ENCODE measurements at regions of chr13 and their contacts with region 1.

Region 1: GRCh38 chr13:41668130-41668757 is 210.9 kb downstream of the RGCC start:
- DNase-seq: peak; percentile 89
- H3K4me3 ChIP-seq: no peak overlapping the region
- H3K27ac ChIP-seq: no peak overlapping the region
- H3K4me1 ChIP-seq: no peaks in the 10 kb centered on the region
- CTCF ChIP-seq: peak; percentile 97

Region 2: GRCh38 chr13:40517486-40518480 is 1150.5 kb before region 1 on chr13:
- CTCF ChIA-PET with region 1: no interaction called
- POLR2A ChIA-PET with region 1: no interaction called
- intact Hi-C with region 1: no loop called
- DNase-seq: peak; percentile 26
- H3K4me3 ChIP-seq: peak overlapping the region; percentile 6
- H3K27ac ChIP-seq: no peak overlapping the region
- H3K4me1 ChIP-seq: peaks cover 39% of the 10 kb centered on the region
- CTCF ChIP-seq: no peak

Region 3: DNA sequence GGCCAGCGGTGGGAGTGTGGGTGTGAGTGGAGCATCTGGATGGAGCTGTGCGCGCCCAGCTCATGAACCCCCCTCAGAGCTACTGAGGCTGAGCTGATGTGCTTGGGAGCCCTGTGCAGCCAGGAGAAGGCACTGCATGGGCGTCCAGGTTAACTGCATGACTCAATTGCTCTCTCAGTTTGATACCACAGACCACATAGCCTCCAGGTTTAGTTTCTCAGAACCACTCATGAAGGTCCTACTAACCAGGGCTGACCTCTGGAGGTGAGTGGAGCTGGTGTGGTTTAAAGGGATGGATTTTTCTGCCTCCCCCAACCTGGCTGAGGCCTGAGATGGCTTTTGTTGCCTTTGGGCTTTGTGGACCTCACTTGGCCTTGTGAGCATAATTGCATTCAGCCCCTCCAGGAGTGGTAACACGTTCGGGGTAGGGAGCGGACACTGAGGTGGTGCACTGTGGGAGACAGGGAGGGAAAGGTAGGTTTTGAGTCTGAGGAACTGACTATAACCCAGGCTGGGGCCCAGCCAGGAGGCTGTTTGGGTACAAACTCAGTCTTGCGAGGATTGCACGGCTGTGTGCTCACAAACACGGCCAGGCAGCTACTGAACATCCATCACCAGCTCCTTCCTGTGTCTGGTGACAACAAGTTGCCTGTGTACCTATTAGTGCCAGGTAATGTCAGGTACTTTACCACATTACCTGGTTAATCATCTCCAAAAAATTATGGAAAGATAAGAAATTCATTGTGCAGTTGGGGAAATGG is 113.4 kb before region 1 on chr13:
- CTCF ChIA-PET with region 1: no interaction called
- POLR2A ChIA-PET with region 1: no interaction called
- intact Hi-C with region 1: no loop called
- DNase-seq: peak; percentile 89
- H3K4me3 ChIP-seq: peak overlapping the region; percentile 32
- H3K27ac ChIP-seq: peak overlapping the region; percentile 77
- H3K4me1 ChIP-seq: peaks cover 46% of the 10 kb centered on the region
- CTCF ChIP-seq: 0 out of 2 replicates have a peak, but pooled peaks have one; percentile 21

Region 4: DNA sequence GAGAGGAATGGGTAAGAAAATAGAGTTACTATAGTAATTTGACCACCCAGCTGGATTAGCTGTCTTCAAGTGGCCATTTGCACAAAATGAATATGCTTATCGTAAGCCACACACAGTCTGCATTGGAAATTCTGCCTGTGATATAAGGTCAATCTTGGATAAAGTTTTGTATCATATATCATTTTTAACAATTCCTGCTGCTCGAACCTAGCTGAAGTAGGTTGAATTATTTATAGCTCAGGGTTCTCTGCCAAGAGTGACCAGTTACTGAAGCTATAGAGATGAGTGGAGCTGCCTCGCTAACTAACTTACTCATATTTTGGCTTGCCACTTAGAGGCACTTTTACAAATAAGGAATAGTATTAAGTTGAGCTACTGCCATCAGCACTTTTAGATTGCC is 10.0 kb after region 1 on chr13:
- CTCF ChIA-PET with region 1: interaction called, 3 read pairs
- POLR2A ChIA-PET with region 1: interaction called, 20 read pairs
- intact Hi-C with region 1: no loop called
- DNase-seq: no peak
- H3K4me3 ChIP-seq: no peak overlapping the region
- H3K27ac ChIP-seq: no peak overlapping the region
- H3K4me1 ChIP-seq: peaks cover 8% of the 10 kb centered on the region
- CTCF ChIP-seq: no peak

Region 5: DNA sequence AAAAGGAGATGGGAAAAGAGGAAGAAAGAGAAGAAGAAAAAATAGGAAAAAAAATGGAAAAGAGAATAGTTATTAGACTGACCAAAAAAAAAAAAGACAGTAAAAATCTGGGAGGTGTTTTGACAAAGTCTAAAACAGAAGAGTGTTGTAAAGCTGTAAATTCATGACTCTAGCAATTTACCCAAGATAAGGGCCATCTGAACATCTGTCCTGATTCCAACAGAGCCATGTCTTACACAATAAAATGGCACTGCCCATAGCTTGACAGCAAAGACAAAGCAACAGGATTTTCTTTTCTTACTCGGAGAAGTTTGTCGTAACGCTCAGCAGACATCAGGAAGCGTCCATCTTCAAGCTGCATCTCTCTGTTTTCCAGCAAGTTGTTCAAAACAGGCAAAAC is 222.9 kb after region 1 on chr13:
- CTCF ChIA-PET with region 1: no interaction called
- POLR2A ChIA-PET with region 1: no interaction called
- intact Hi-C with region 1: no loop called
- DNase-seq: no peak
- H3K4me3 ChIP-seq: no peak overlapping the region
- H3K27ac ChIP-seq: no peak overlapping the region
- H3K4me1 ChIP-seq: no peaks in the 10 kb centered on the region
- CTCF ChIP-seq: no peak

Region 6: GRCh38 chr13:41905600-41906254 is 237.5 kb after region 1 on chr13:
- CTCF ChIA-PET with region 1: no interaction called
- POLR2A ChIA-PET with region 1: interaction called, 5 read pairs
- intact Hi-C with region 1: loop called (anchors 5 kb)
- DNase-seq: peak; percentile 75
- H3K4me3 ChIP-seq: no peak overlapping the region
- H3K27ac ChIP-seq: no peak overlapping the region
- H3K4me1 ChIP-seq: no peaks in the 10 kb centered on the region
- CTCF ChIP-seq: peak; percentile 89

Region 7: GRCh38 chr13:41985788-41986508 is 317.7 kb after region 1 on chr13:
- CTCF ChIA-PET with region 1: no interaction called
- POLR2A ChIA-PET with region 1: no interaction called
- intact Hi-C with region 1: loop called (anchors 10 kb)
- DNase-seq: no peak
- H3K4me3 ChIP-seq: no peak overlapping the region
- H3K27ac ChIP-seq: no peak overlapping the region
- H3K4me1 ChIP-seq: no peaks in the 10 kb centered on the region
- CTCF ChIP-seq: no peak

Region 8: DNA sequence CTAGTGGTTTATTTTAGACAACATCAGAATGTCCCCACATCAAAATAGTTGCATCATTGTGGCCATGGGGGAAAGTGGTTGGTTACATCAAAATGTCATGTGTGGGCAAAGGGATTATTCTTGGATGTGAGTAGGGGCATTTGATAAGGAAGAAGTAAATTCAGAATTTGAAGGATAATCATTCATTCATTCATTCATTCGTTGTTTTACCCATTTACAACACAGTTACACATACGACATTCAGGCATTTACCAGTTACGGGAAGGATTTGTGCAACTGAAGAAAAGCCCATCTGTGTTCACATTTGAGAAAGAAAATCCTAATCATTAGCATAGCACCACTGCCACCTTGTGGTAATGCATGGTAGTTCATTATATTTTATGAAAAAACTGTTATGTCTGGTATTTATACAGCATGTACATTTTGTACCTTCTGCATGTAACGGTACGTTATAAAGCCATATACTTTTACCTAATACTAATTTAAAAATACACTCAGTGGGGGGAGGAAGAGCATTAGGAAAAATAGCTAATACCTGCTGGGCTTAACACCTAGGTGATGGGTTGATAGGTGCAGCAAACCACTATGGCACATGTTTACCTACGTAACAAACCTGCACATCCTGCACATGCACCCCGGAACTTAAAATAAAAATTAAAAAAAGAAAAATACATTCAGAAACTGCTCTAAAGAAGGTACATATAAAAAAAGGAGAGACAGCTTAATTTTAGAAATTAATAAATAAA is 442.3 kb after region 1 on chr13:
- CTCF ChIA-PET with region 1: interaction called, 5 read pairs
- POLR2A ChIA-PET with region 1: interaction called, 4 read pairs
- intact Hi-C with region 1: loop called (anchors 1 kb)
- DNase-seq: peak; percentile 69
- H3K4me3 ChIP-seq: no peak overlapping the region
- H3K27ac ChIP-seq: no peak overlapping the region
- H3K4me1 ChIP-seq: no peaks in the 10 kb centered on the region
- CTCF ChIP-seq: peak; percentile 91

Region 9: DNA sequence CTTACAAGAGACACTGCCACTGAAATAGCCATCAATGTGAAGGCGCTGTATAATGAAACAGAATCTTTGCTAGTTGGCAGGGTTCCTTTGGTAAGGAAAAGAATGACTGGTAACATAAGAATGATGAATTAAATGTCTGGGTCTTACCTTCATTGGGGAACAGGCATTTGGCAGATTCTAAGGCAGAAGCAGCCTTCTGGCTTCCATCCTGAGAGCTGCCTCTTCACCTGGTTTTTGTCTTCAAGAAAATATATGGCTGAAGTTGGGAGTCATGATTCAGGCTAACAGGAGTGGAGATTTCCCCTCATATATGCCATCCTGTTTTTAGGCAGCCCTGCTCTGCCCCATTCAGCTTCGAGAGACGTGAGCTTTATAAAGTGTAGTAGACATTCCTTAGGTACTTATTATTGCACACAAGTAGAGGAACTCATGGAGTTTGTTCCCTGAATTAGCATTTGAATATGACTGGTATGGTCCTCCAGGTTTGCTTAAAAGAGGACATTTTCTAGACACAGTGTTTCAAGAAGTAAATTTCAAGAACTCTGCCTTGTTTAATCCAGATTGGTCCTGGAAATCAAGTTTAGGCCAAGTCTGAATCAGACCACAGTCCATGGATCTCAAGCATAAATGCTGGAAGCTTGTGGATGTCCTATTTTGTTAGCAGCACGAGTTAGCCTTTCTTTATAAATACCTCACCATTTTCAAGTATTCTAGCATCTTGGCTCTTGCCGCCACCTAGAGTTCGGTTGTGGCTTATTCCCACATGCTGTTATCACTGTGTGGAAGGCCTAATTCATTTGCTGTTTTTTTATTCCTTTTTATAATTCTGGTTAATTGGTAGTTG is 547.6 kb after region 1 on chr13:
- CTCF ChIA-PET with region 1: no interaction called
- POLR2A ChIA-PET with region 1: no interaction called
- intact Hi-C with region 1: loop called (anchors 1 kb)
- DNase-seq: peak; percentile 46
- H3K4me3 ChIP-seq: no peak overlapping the region
- H3K27ac ChIP-seq: no peak overlapping the region
- H3K4me1 ChIP-seq: no peaks in the 10 kb centered on the region
- CTCF ChIP-seq: peak; percentile 85

Measured in OCI-LY7 (cell line).